ENCODE measurements at regions of chr9 and their contacts with region 1.

Region 1: GRCh38 chr9:136118320-136119060 is at the start of gene TMEM250:
- DNase-seq: peak; percentile 98
- total RNA-seq, gene TMEM250: 19.8 TPM

Region 2: DNA sequence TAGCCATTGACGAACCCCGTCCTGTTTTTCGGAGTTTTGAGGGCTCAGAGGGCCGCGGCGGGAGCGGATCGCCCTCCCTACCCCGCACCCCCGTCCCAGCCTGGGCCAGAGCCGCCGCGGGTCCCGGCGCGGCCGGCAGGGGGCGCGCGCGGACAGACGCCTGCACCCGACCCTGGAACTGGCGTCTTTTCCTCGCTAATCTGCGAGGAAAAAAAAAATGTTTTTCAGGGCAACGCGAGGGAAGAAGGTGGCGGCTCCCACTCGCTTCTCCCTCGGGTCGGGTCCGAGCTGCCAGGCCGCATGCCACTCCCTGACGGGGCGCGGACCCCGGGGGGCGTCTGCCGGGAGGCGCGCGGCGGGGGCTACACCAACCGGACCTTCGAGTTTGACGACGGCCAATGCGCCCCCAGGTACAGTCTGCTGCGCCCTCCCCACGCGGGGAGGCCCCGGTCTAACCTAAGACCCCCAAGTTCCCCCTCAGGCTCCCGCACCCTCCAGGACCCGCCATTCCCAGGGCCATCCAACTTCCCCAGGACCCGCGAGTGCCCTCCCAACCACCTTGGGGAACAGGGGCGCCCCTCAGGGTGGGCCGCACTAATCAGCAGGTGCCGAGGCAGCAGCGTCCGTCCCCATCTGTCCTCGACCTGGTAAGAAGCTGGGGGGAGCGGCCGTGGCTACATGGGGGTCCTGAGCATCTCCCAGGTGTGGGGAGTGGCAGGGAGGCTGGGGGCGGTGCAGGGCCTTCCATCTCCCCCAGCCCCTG is 416.4 kb before region 1 on chr9 and contains the start of gene KCNT1:
- intact Hi-C with region 1: loop called (anchors 5 kb)
- DNase-seq: no peak
- total RNA-seq, gene KCNT1: 1.2 TPM

Region 3: GRCh38 chr9:135907431-135908092 is 210.9 kb before region 1 on chr9 and contains the start of gene CAMSAP1:
- intact Hi-C with region 1: loop called (anchors 5 kb)
- DNase-seq: peak; percentile 98
- total RNA-seq, gene CAMSAP1: 25.5 TPM

Region 4: GRCh38 chr9:135971892-135972291 is 146.6 kb before region 1 on chr9:
- intact Hi-C with region 1: loop called (anchors 1 kb)
- DNase-seq: no peak

Region 5: DNA sequence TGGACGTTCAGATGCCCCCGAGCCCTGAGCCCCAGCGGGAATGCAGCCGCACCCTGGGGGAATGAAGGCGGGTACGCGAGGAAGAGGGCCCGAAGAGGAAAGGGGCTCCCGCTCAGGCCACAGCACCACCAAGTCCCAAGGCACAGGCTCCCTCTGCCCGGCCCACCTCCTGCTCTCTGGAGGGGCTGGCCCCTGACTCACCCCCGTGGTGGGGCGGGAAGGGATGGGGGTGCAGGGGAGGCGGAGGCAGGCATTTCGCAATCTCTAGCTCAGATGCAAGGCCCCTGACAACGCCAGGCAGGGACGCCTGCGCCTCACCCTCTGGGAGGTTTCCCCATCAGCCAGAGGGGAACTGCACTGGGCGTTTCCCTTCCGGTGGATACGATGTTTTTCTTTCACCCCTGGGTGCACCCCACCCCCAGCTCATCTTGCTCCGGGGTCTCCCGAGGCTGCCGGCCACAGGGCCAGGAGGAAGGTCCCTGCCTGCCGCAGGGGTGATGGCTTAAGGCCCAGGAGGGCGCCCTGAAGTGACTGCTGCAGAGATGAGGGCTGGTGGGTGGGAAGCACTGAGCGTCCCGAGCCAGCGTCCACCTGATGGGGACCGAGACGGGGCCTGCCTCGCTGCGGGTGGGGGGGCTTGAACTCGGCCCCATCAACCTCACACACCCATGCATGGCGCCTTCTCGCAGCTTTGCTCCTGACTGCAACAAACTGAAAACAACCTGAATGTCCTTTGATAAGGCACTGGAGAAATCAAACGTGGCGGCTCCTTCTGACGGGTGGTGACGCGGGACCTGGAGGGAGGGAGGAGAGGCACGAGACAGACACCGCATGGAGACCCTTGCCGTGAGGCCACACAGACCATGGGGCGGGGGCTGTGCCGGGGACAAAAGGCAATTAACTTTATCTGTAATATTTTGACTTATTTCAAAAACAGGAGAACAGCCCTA is 72.2 kb before region 1 on chr9:
- intact Hi-C with region 1: no loop called
- DNase-seq: peak; percentile 87

Region 6: DNA sequence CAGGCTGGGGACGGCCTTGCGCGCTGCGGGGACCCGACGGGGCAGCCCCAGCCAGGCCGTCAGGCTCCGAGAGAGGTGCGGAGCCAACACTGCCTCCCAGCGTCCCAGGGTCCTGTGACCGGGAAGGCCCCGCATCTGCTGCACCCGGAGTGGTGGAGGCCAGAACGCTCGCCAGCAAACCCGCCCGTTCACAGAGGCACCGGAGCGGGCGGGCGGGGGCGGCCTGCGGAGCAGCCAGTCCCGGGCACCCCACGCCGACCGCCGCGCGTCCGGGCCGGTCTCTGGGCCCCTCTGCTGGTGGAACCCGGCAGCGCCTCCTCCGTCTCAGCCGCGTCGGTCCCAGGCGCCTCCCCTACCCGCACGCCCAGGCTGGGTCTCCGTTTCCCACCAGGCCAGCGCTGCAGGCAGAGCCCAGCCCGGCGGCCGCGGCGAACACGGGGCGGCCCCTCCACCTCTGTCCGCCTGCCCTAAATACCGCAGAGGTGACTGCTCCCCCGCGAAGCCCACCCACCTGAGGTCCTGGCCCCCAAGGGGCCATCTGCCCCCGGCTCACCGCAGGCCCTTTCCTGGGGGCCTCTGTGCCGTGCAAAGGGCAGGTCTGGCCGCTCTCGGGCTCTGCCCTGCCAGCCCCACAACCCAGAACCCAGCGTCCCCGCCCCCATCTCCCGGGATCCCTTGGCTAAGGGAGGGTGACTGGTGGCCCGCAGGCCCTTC is 1288.5 kb after region 1 on chr9:
- intact Hi-C with region 1: no loop called
- DNase-seq: no peak

Measured in cardiac septum (tissue), 1 donor.